Activated T-helper 1 cell treated with anti-CD3 and anti-CD28 coated beads, Interleukin-12 subunit alpha, Interleukin-12 subunit beta, Interleukin-2, Interleukin-4 antibody, amounts not matched to agents 30 ng/mL and 10 ng/mL and 1 ng/mL, durations not matched to agents 14 hours and 24 hours and 36 hours (primary cell): ENCODE measurements at regions of chr14 and their contacts with region 1.

Region 1: DNA sequence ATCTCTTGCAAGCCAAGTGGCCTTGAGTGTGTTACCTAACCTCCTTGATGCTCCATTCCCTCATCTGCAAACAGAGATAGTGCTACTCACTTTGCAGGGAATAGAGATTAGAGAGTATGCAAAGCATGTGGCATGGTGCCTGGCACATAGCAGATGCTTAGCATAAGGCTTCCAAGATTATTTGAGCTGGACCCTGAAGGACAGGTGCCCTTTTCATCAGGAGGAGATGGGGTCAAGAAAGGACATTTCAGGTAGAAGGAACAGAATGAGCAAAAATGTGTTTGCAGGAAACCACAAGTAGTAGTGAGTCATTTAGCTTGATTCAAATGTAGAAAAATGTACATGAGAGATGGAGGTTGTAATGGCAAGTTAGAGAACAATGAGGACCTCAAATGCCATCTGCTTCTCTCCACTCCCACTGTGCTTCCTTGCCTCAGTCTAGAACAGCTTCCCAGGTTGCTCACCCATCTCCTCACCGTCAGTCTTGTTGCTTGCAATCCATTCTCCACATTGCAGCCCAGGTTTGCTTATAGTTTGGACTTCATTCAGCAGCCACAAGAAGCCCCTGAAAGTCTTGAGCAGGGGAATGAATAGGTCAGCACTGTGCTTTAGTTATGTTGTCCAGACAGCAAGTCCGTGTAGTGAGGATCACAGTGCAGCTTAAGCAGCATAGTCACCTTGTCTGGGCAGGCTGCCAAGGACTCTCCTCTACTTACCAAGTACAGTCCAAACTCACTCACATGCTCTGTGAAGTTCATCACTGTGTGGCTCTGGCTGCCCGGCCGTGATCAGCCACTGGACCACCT is 536.3 kb upstream of the CCDC196 start:
- DNase-seq: no peak
- H3K4me3 Mint-ChIP-seq: peak overlapping the region; percentile 11
- H3K27ac Mint-ChIP-seq: peak overlapping the region; percentile 50
- H3K4me1 Mint-ChIP-seq: peaks cover 59% of the 10 kb centered on the region
- H3K27me3 Mint-ChIP-seq: peaks cover 11% of the 10 kb centered on the region

Region 2: GRCh38 chr14:65879248-65880009 is 70.5 kb before region 1 on chr14:
- intact Hi-C with region 1: loop called (anchors 1 kb)
- DNase-seq: no peak
- H3K4me3 Mint-ChIP-seq: no peak overlapping the region
- H3K27ac Mint-ChIP-seq: peak overlapping the region; percentile 18
- H3K4me1 Mint-ChIP-seq: peaks cover 5% of the 10 kb centered on the region
- H3K27me3 Mint-ChIP-seq: no peaks in the 10 kb centered on the region

Region 3: DNA sequence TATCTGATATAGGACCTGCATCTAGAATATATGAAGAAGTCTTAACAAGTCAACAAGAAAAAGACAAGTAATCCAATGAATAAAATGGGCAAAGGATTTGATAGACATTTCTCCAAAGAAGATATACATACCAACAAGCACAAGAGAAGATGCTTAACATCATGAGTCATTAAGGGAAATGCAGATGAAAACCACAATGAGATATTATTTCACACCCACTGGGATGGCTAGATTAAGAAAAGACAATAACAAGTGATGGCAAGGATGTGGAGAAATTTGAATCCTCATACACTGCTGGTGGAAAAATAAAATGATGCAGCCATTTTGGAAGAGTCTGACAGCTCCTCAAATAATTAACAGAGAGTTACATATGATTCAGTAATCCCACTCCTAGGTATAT is 34.8 kb before region 1 on chr14:
- intact Hi-C with region 1: loop called (anchors 1 kb)
- DNase-seq: no peak
- H3K4me3 Mint-ChIP-seq: no peak overlapping the region
- H3K27ac Mint-ChIP-seq: no peak overlapping the region
- H3K4me1 Mint-ChIP-seq: peaks cover 54% of the 10 kb centered on the region
- H3K27me3 Mint-ChIP-seq: peaks cover 7% of the 10 kb centered on the region

Region 4: GRCh38 chr14:65927931-65928356 is 22.0 kb before region 1 on chr14:
- intact Hi-C with region 1: loop called (anchors 1 kb)
- DNase-seq: peak; percentile 82
- H3K4me3 Mint-ChIP-seq: peak overlapping the region; percentile 50
- H3K27ac Mint-ChIP-seq: peak overlapping the region; percentile 86
- H3K4me1 Mint-ChIP-seq: peaks cover 60% of the 10 kb centered on the region
- H3K27me3 Mint-ChIP-seq: peaks cover 4% of the 10 kb centered on the region